ENCODE measurements at regions of chr3 and their contacts with region 1.

Region 1: GRCh38 chr3:70358978-70359580 is 46.6 kb upstream of the MDFIC2 start:
- DNase-seq: no peak
- ATAC-seq: peak; percentile 26
- H3K4me3 ChIP-seq: no peak overlapping the region
- H3K27ac ChIP-seq: no peak overlapping the region
- H3K4me1 ChIP-seq: peaks cover 0 to 2% of the 10 kb centered on the region in 2 donors
- H3K27me3 ChIP-seq: no peaks in the 10 kb centered on the region

Region 2: DNA sequence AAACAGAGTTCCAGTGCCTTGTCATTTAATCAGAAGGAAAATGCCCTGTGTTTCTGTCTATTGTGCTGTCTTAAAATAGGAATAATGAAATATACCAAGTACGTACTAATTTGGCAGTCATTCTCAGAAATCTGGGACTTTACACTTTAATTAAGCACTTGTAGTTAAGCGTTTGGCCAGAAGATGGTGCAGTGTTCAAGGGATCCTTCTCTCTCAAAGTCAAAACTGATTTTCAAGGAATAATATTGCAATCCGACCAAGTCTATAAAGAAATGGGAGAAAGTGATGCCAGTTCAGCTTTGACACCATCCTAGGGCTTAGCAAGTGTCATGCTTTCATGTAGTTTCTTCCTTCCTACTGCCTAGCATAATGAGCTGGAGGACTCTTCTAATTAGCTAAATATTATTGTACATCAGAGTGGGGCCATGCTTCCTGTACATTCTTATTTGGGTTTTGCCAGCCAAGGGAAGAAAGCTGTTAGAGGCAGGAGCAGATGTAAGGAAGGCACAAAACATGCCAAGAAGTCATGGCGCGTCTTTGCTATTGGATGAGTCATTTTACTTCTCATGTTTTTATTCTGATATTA is 294.8 kb before region 1 on chr3:
- intact Hi-C with region 1: loop called (anchors 5 kb)
- DNase-seq: no peak
- ATAC-seq: no peak
- H3K4me3 ChIP-seq: no peak overlapping the region
- H3K27ac ChIP-seq: peak overlapping the region; percentile 22 to 44
- H3K4me1 ChIP-seq: peaks cover 7 to 8% of the 10 kb centered on the region in 2 donors
- H3K27me3 ChIP-seq: no peaks in the 10 kb centered on the region

Region 3: GRCh38 chr3:70090322-70090913 is 268.7 kb before region 1 on chr3:
- intact Hi-C with region 1: loop called in 1 of 2 experiments (anchors 5 kb)
- DNase-seq: no peak
- ATAC-seq: no peak
- H3K4me3 ChIP-seq: no peak overlapping the region
- H3K27ac ChIP-seq: no peak overlapping the region
- H3K4me1 ChIP-seq: peaks cover 0 to 2% of the 10 kb centered on the region in 2 donors
- H3K27me3 ChIP-seq: no peaks in the 10 kb centered on the region

Region 4: DNA sequence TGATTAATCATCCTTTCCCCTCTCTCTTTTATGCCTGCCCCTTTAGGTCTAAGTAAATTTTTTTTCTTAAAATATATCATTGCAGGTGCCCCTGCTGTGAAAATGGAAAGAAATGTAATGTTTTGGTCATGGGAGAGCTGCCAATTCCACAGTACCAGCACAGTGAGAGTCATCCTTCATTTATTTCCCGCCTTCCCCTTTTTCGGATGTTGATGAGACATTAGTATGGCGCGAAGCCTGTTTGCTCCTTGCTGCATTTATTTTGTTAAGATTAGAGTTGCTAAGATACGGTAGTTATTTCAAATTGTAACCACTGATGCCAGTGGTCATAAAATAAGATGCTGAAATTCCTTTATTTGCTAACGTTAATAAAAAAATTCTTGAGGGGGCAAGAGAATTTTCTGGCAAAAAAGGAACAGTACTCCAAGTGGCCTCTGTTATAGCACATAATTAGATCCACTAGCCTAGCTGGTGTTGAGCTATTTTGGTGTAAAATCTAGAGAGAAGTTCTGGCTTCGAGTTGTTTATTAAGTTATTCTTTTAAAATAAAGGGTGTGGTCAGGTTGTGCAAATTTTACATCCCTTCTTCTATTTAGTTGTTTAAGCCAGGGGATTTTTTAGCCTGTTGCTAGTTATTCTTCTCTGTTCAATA is 109.4 kb before region 1 on chr3:
- intact Hi-C with region 1: loop called in 1 of 2 experiments (anchors 5 kb)
- DNase-seq: peak in 1 of 2 donors; percentile 49
- ATAC-seq: peak; percentile 77
- H3K4me3 ChIP-seq: no peak overlapping the region
- H3K27ac ChIP-seq: no peak overlapping the region
- H3K4me1 ChIP-seq: peaks cover 0 to 1% of the 10 kb centered on the region in 2 donors
- H3K27me3 ChIP-seq: no peaks in the 10 kb centered on the region

Measured in aorta (tissue), 5 donors.